ENCODE measurements at regions of chr18 and their contacts with region 1.

Region 1: GRCh38 chr18:77132371-77133050 is at the start of gene MBP:
- DNase-seq: peak; percentile 68 to 82
- ATAC-seq: peak; percentile 36 to 48 (median 47)
- H3K4me3 ChIP-seq: peak within 1 kb of the TSS; percentile 84
- H3K4me3 Mint-ChIP-seq: peak within 1 kb of the TSS; percentile 94
- H3K27ac ChIP-seq: peak within 1 kb of the TSS; percentile 84
- H3K27ac Mint-ChIP-seq: peak within 1 kb of the TSS; percentile 88 to 95
- H3K4me1 ChIP-seq: peaks cover 54% of the 10 kb centered on the region
- H3K4me1 Mint-ChIP-seq: peaks cover 70 to 76% of the 10 kb centered on the region in 2 donors
- H3K27me3 ChIP-seq: no peaks in the 10 kb centered on the region
- H3K27me3 Mint-ChIP-seq: no peaks in the 10 kb centered on the region
- CTCF ChIP-seq: no peak
- total RNA-seq, gene MBP: 183 to 344 (median 325) TPM

Region 2: DNA sequence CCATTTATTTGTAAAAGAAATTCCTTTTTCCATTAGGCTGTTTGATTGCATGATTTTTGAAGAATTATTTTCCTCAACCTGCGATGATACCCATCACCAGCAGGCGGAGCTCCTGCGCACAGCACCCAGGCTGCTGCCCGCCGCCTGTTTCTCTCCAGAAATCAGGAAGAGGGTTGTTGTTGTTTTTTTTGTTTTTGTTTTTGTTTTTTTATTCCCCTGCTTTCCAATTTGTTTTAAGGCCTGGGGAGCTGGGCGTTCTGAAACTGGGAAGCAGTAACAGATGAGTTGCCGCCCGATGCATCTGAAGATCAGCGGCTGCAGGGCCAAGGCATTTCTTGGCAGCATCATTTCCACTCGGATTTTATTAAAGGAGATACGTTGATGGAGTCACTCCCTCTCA is 132.0 kb before region 1 on chr18:
- intact Hi-C with region 1: loop called (anchors 5 kb)
- DNase-seq: peak; percentile 59 to 78
- ATAC-seq: peak in 2 of 3 donors; percentile 64 to 76
- H3K4me3 ChIP-seq: no peak overlapping the region
- H3K4me3 Mint-ChIP-seq: no peak overlapping the region
- H3K27ac ChIP-seq: no peak overlapping the region
- H3K27ac Mint-ChIP-seq: peak overlapping the region; percentile 29 to 46
- H3K4me1 ChIP-seq: peaks cover 29% of the 10 kb centered on the region
- H3K4me1 Mint-ChIP-seq: peaks cover 31 to 39% of the 10 kb centered on the region in 2 donors
- H3K27me3 ChIP-seq: no peaks in the 10 kb centered on the region
- H3K27me3 Mint-ChIP-seq: peaks cover 0 to 2% of the 10 kb centered on the region in 2 donors
- CTCF ChIP-seq: peak; percentile 99

Region 3: DNA sequence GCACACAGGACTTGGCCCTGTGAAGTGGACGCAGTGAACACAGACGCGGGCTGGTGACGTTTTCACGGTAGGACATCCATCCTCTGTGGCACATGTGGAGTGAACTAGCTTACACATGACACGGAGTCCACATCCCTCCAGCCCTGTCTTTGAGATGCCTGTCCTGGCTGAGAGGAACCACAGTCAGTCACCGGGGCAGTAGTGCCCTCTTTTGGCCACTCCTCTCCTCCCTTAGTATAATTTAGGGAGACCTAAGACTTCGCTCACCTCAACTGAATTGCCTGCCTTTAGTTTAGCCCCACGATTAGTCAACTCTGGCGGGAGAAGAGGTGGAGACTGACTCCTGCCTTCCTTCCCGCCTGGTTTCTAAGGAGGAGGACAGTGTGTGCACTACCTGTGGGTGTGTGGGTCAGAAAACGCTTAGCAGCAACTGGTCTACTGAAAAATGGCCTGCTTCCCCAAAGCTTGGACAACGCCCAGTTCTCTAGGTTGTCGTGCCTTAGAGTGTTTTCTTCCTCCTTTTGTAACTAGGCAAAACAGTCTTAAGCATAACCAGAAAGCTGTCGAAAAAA is 70.5 kb before region 1 on chr18:
- intact Hi-C with region 1: loop called (anchors 2 kb)
- DNase-seq: peak in 1 of 2 donors; percentile 47
- ATAC-seq: peak; percentile 25 to 57 (median 47)
- H3K4me3 ChIP-seq: no peak overlapping the region
- H3K4me3 Mint-ChIP-seq: peak overlapping the region; percentile 81
- H3K27ac ChIP-seq: peak overlapping the region; percentile 93
- H3K27ac Mint-ChIP-seq: peak overlapping the region; percentile 94 to 98
- H3K4me1 ChIP-seq: peaks cover 90% of the 10 kb centered on the region
- H3K4me1 Mint-ChIP-seq: peaks cover 86 to 88% of the 10 kb centered on the region in 2 donors
- H3K27me3 ChIP-seq: no peaks in the 10 kb centered on the region
- H3K27me3 Mint-ChIP-seq: no peaks in the 10 kb centered on the region
- CTCF ChIP-seq: no peak

Region 4: DNA sequence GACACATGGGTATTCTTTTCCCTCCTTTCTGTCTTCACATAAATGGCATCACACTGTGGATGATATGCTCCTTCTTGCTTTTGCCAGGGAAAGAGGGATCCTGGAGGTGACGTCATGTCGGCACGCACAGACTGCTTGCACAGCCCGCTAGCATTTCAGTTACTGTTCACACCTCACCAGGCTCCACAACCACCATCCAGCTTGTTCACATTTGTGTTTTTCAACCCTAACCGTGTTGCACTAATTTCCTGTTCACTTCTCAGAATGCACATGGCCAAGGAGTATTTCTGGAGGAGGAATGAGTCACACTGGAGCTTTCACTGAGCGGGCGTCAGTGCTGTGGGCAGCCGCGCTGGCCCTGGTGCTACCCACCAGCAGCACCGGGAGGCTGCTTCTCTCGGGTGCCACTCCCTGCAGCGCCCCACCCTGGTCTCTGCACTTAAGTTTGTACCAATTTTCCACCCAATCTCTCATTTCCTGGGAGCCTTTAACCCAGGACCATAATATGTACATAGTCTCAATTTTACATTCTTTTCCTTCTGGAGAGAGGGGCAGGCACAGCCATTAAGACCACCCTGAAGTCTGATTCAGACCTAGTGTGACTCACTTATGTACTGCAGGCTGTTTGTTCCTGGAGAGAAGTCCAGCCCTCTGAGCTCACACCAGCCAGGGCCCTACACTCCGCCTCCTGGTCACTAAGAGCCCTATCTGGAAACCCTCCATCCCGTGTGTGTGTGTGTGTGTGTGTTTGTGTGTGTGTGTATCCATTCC is 65.0 kb before region 1 on chr18:
- intact Hi-C with region 1: loop called (anchors 2 kb)
- DNase-seq: peak; percentile 74 to 84
- ATAC-seq: peak; percentile 45 to 73 (median 64)
- H3K4me3 ChIP-seq: no peak overlapping the region
- H3K4me3 Mint-ChIP-seq: peak overlapping the region; percentile 83
- H3K27ac ChIP-seq: peak overlapping the region; percentile 93
- H3K27ac Mint-ChIP-seq: peak overlapping the region; percentile 94 to 98
- H3K4me1 ChIP-seq: peaks cover 96% of the 10 kb centered on the region
- H3K4me1 Mint-ChIP-seq: peaks cover 100% of the 10 kb centered on the region in 2 donors
- H3K27me3 ChIP-seq: no peaks in the 10 kb centered on the region
- H3K27me3 Mint-ChIP-seq: no peaks in the 10 kb centered on the region
- CTCF ChIP-seq: no peak

Region 5: DNA sequence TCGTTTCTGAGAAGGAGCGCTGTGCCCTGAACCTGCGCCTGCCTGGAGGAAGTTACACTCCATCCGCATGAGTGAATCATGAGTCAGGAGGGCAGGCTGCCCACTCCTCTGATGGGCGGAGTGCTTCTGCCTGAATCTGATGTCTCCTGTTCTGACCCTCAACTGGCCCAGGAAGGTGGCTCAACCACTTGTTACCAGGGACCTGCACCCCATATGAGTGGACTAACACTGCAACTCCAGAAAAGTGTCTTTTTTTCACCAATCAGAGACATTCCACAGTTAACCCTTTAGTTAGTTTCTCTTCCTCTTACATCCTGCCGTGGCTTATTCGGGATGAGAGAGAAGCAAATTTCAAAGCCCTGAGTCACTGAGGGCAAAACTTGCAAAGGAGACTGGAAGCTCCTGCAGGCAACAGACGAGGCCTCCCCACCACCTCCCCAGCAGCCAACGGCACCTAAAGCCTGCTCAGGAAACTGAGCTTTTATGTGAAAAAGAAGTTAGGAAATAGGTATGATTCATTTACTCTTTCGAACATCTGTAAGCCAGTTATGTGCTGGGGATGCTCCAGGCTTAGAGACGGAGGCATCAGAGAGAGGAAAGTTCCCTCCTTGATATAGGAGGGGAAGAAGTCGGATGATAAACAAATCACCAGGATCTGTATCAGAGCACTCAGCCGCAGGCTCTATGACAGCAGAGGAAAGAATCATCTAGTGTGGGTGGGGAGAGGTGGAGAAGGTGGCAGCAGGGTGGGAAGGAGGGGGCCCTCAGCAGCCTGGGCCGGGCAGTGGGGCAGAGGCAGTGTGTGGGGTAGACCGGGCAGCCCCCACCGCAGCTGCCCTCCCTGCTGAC is 30.9 kb before region 1 on chr18:
- intact Hi-C with region 1: loop called (anchors 2 kb)
- DNase-seq: peak; percentile 56 to 69
- ATAC-seq: peak; percentile 35 to 61 (median 42)
- H3K4me3 ChIP-seq: peak overlapping the region; percentile 1
- H3K4me3 Mint-ChIP-seq: peak overlapping the region; percentile 79
- H3K27ac ChIP-seq: peak overlapping the region; percentile 92
- H3K27ac Mint-ChIP-seq: peak overlapping the region; percentile 87 to 94
- H3K4me1 ChIP-seq: peaks cover 91% of the 10 kb centered on the region
- H3K4me1 Mint-ChIP-seq: peaks cover 92 to 98% of the 10 kb centered on the region in 2 donors
- H3K27me3 ChIP-seq: no peaks in the 10 kb centered on the region
- H3K27me3 Mint-ChIP-seq: no peaks in the 10 kb centered on the region
- CTCF ChIP-seq: no peak

Region 6: GRCh38 chr18:77108001-77108692 is 24.4 kb before region 1 on chr18:
- intact Hi-C with region 1: loop called (anchors 2 kb)
- DNase-seq: peak; percentile 39 to 67
- ATAC-seq: peak; percentile 52 to 71 (median 54)
- H3K4me3 ChIP-seq: no peak overlapping the region
- H3K4me3 Mint-ChIP-seq: peak overlapping the region; percentile 79
- H3K27ac ChIP-seq: peak overlapping the region; percentile 86
- H3K27ac Mint-ChIP-seq: peak overlapping the region; percentile 87 to 94
- H3K4me1 ChIP-seq: peaks cover 92% of the 10 kb centered on the region
- H3K4me1 Mint-ChIP-seq: peaks cover 94 to 97% of the 10 kb centered on the region in 2 donors
- H3K27me3 ChIP-seq: no peaks in the 10 kb centered on the region
- H3K27me3 Mint-ChIP-seq: no peaks in the 10 kb centered on the region
- CTCF ChIP-seq: no peak

Region 7: GRCh38 chr18:77207540-77207939 is 75.0 kb after region 1 on chr18:
- intact Hi-C with region 1: loop called (anchors 2 kb)
- DNase-seq: peak in 1 of 2 donors; percentile 82
- ATAC-seq: peak; percentile 61 to 74 (median 74)
- H3K4me3 ChIP-seq: no peak overlapping the region
- H3K4me3 Mint-ChIP-seq: no peak overlapping the region
- H3K27ac ChIP-seq: no peak overlapping the region
- H3K27ac Mint-ChIP-seq: peak overlapping the region; percentile 47 to 96
- H3K4me1 ChIP-seq: peaks cover 41% of the 10 kb centered on the region
- H3K4me1 Mint-ChIP-seq: peaks cover 45 to 47% of the 10 kb centered on the region in 2 donors
- H3K27me3 ChIP-seq: no peaks in the 10 kb centered on the region
- H3K27me3 Mint-ChIP-seq: no peaks in the 10 kb centered on the region
- CTCF ChIP-seq: peak; percentile 49

Region 8: GRCh38 chr18:77223653-77224052 is 91.1 kb after region 1 on chr18:
- intact Hi-C with region 1: no loop called
- DNase-seq: no peak
- ATAC-seq: no peak
- H3K4me3 ChIP-seq: no peak overlapping the region
- H3K4me3 Mint-ChIP-seq: no peak overlapping the region
- H3K27ac ChIP-seq: no peak overlapping the region
- H3K27ac Mint-ChIP-seq: no peak overlapping the region
- H3K4me1 ChIP-seq: peaks cover 13% of the 10 kb centered on the region
- H3K4me1 Mint-ChIP-seq: peaks cover 30 to 32% of the 10 kb centered on the region in 2 donors
- H3K27me3 ChIP-seq: no peaks in the 10 kb centered on the region
- H3K27me3 Mint-ChIP-seq: peaks cover 11 to 20% of the 10 kb centered on the region in 2 donors
- CTCF ChIP-seq: no peak

Region 9: GRCh38 chr18:77461062-77461688 is 328.7 kb after region 1 on chr18:
- intact Hi-C with region 1: no loop called
- DNase-seq: no peak
- ATAC-seq: no peak
- H3K4me3 ChIP-seq: no peak overlapping the region
- H3K4me3 Mint-ChIP-seq: no peak overlapping the region
- H3K27ac ChIP-seq: no peak overlapping the region
- H3K27ac Mint-ChIP-seq: no peak overlapping the region
- H3K4me1 ChIP-seq: no peaks in the 10 kb centered on the region
- H3K4me1 Mint-ChIP-seq: no peaks in the 10 kb centered on the region
- H3K27me3 ChIP-seq: no peaks in the 10 kb centered on the region
- H3K27me3 Mint-ChIP-seq: peaks cover 22 to 55% of the 10 kb centered on the region in 2 donors
- CTCF ChIP-seq: no peak